ENCODE measurements at regions of chr20 and their contacts with region 1.

Region 1: DNA sequence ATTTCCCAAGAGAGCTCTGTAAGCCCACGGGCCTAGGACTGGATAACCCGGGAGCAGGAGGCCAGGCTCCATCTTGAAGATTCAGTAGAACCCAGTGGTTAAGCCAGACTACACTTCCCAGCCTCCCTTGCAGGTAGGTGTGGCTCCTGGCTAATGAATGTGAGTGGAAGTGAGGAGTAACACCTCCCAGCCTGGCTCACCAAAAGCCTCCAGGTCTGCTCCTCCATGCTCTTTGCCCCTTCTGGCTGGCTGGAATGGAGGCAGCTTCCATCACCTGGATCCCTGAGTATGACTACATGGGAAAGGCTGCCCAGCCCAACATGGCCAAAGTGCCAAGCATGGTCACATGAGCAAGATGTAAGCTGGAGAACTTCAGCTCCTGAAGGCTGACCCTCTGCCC is 9.7 kb downstream of the LRRN4 start:
- DNase-seq: no peak
- H3K4me3 ChIP-seq: no peak overlapping the region
- H3K27ac ChIP-seq: no peak overlapping the region
- H3K4me1 ChIP-seq: no peaks in the 10 kb centered on the region
- H3K27me3 ChIP-seq: no peaks in the 10 kb centered on the region
- CTCF ChIP-seq: no peak
- POLR2A ChIP-seq: no peak

Region 2: GRCh38 chr20:6029538-6029937 is 14.6 kb before region 1 on chr20:
- CTCF ChIA-PET with region 1: interaction called, 3 read pairs
- POLR2A ChIA-PET with region 1: interaction called, 16 read pairs
- dilution Hi-C with region 1: no loop called
- intact Hi-C with region 1: no loop called
- DNase-seq: no peak
- H3K4me3 ChIP-seq: no peak overlapping the region
- H3K27ac ChIP-seq: no peak overlapping the region
- H3K4me1 ChIP-seq: peaks cover 11% of the 10 kb centered on the region
- H3K27me3 ChIP-seq: no peaks in the 10 kb centered on the region
- CTCF ChIP-seq: no peak
- POLR2A ChIP-seq: no peak

Region 3: DNA sequence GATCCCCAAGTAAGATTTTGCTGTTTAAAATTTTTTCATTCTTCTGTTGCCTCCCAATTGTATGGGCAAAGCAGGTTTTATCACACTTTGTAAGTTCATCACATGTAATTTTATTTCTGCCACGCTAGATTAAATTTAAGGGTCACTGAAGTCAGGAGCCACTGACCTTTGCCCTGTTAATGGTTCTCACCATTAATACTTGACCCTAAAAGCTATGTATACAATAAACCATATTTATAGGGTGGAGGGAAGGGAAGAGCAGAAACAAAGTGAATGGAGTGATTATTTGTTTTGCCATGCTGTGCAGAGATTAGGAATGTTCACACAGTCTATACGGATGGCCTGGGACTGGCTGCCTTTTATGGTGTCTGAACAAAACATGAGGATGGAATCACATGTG is 910.1 kb after region 1 on chr20:
- CTCF ChIA-PET with region 1: no interaction called
- POLR2A ChIA-PET with region 1: no interaction called
- dilution Hi-C with region 1: no loop called
- intact Hi-C with region 1: no loop called
- DNase-seq: no peak
- H3K4me3 ChIP-seq: no peak overlapping the region
- H3K27ac ChIP-seq: no peak overlapping the region
- H3K4me1 ChIP-seq: peaks cover 8% of the 10 kb centered on the region
- H3K27me3 ChIP-seq: no peaks in the 10 kb centered on the region
- CTCF ChIP-seq: no peak
- POLR2A ChIP-seq: no peak

Region 4: GRCh38 chr20:7520361-7520760 is 1476.2 kb after region 1 on chr20:
- CTCF ChIA-PET with region 1: no interaction called
- POLR2A ChIA-PET with region 1: no interaction called
- dilution Hi-C with region 1: no loop called
- intact Hi-C with region 1: loop called (anchors 5 kb)
- DNase-seq: no peak
- H3K4me3 ChIP-seq: no peak overlapping the region
- H3K27ac ChIP-seq: no peak overlapping the region
- H3K4me1 ChIP-seq: no peaks in the 10 kb centered on the region
- H3K27me3 ChIP-seq: no peaks in the 10 kb centered on the region
- CTCF ChIP-seq: no peak
- POLR2A ChIP-seq: no peak

Measured in endothelial cell of umbilical vein (primary cell).